Panc1 (cell line): ENCODE measurements at regions of chr10 and their contacts with region 1.

Region 1: DNA sequence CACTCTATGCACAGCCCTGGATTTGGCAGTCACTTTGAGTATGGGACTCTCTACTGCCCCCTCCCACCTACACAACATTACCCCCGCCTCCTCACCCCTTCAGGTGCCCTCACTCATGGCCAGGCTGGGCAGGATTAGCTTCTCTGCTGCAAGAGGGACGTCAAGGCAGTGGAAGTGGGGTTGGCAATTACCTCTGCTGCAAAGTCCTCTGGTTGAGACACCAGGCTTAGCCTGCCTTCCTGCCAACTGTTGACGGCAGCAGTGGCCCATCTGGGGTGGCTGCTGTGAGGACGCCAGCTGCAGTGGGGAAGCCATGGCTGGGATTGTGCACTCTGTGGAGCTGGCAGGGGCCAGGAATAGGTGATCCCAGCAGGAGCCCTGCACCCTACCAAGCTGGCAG is 26.7 kb downstream of the SVIL start:
- DNase-seq: no peak
- ATAC-seq: peak; percentile 33
- H3K4me3 ChIP-seq: no peak overlapping the region
- H3K27ac ChIP-seq: no peak overlapping the region
- H3K4me1 ChIP-seq: peaks cover 14% of the 10 kb centered on the region; the same call in 1 of the 2 replicates
- H3K27me3 ChIP-seq: no peaks in the 10 kb centered on the region
- CTCF ChIP-seq: no peak

Region 2: DNA sequence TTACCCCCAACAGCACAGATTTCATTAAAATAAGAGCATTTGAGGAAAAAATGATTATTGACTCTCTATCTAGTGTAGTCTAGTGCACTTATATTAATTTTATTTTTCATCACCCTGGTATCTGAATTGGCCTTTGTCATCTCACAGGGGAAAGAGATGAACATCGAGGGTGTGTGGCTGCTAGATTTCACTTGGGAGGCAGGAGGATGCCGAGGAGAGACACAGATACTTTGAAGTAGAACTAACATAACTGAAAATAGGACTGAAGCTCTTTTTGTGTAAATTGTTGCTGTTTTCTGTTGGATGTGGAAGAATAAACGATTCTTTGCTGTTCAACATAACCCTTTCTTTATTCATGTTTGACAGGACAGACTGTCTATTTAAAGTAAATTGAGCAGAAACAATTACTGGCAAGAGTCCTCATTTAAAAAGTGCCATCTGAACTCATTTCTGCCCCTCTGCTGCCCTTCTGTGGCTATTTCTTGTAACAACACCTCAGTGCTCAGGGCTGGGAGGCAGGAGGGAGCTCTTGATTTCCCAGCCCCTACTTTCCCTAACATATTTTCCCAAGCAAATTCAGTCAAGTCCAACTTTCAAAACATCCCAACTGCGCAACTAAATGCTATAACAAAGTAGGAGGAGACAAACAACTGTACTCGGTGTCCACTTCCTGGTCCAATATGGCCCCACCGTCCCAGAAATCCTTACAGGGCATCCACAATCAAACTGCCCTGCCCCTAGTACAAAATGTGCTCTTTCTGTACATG is 303.6 kb before region 1 on chr10:
- CTCF ChIA-PET with region 1: no interaction called
- POLR2A ChIA-PET with region 1: no interaction called
- in situ Hi-C with region 1: no loop called
- intact Hi-C with region 1: no loop called
- DNase-seq: peak; percentile 39
- ATAC-seq: peak; percentile 85; the same call in 1 of the 2 replicates
- H3K4me3 ChIP-seq: no peak overlapping the region
- H3K27ac ChIP-seq: peak overlapping the region; percentile 51; the same call in 1 of the 2 replicates
- H3K4me1 ChIP-seq: no peaks in the 10 kb centered on the region; the same call in 1 of the 2 replicates
- H3K27me3 ChIP-seq: no peaks in the 10 kb centered on the region
- CTCF ChIP-seq: peak; percentile 75

Region 3: GRCh38 chr10:29508554-29509244 is 99.4 kb before region 1 on chr10:
- CTCF ChIA-PET with region 1: interaction called, 12 read pairs
- POLR2A ChIA-PET with region 1: no interaction called
- in situ Hi-C with region 1: no loop called
- intact Hi-C with region 1: no loop called
- DNase-seq: no peak
- ATAC-seq: no peak
- H3K4me3 ChIP-seq: no peak overlapping the region
- H3K27ac ChIP-seq: no peak overlapping the region
- H3K4me1 ChIP-seq: no peaks in the 10 kb centered on the region
- H3K27me3 ChIP-seq: no peaks in the 10 kb centered on the region
- CTCF ChIP-seq: no peak

Region 4: DNA sequence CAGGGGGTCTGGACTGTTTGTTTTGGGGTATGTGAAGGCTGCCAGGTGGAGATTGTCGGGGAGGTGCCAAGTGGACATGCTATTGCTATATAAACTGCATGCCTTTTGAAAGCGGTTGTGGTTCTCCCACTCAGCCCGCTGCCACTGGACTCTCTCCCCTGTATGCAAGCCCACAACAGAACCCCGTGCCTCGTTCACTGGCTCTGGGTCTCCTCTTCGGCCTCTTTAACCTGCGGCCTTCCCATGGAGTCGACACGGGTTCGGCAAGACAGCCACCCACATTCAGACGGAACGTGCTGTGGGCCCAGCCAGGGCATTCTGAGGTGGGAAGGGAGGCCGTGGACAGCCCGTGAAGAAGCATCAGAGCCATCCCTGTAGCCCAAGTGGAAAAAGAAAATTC is 23.6 kb before region 1 on chr10:
- CTCF ChIA-PET with region 1: no interaction called
- POLR2A ChIA-PET with region 1: interaction called, 15 read pairs
- in situ Hi-C with region 1: no loop called
- intact Hi-C with region 1: no loop called
- DNase-seq: no peak
- ATAC-seq: no peak
- H3K4me3 ChIP-seq: no peak overlapping the region
- H3K27ac ChIP-seq: no peak overlapping the region
- H3K4me1 ChIP-seq: peaks cover 6% of the 10 kb centered on the region
- H3K27me3 ChIP-seq: no peaks in the 10 kb centered on the region
- CTCF ChIP-seq: no peak